GM12878 (cell line): ENCODE measurements at regions of chr1 and their contacts with region 1.

Region 1: DNA sequence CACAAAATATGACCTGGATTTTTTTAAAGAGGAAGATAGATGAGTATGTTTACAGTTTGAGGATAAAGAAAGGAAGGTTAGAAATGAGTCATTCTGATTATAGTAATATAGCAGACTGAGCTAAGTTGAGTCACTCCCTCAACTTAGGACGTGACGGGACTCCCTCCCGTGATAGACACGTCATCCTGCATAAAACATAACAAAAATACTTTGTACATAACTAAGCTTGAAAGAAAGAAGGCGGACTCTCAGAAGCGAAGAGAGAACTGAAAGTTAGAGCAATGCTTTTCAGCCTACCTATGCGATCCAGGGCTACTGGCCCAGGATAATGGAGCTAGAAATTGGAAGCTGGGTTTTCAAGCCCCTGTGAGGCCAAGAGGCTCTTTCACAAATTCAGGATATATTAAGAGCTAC is 53.0 kb upstream of the DESI2 start:
- DNase-seq: peak; percentile 40
- ATAC-seq: peak; percentile 94
- H3K4me3 ChIP-seq: no peak overlapping the region
- H3K27ac ChIP-seq: no peak overlapping the region
- H3K4me1 ChIP-seq: peaks cover 4% of the 10 kb centered on the region
- H3K27me3 ChIP-seq: peaks cover 2% of the 10 kb centered on the region in 2 experiments; a peak in 2 of 4 replicates
- CTCF ChIP-seq: no peak
- EP300 ChIP-seq: peak; percentile 60 to 61
- POLR2A ChIP-seq: no peak
- RAD21 ChIP-seq: no peak

Region 2: GRCh38 chr1:244536316-244536715 is 63.6 kb before region 1 on chr1:
- CTCF ChIA-PET with region 1: no interaction called
- POLR2A ChIA-PET with region 1: no interaction called
- RAD21 ChIA-PET with region 1: no interaction called
- SMC1A ChIA-PET with region 1: no interaction called
- in situ Hi-C with region 1: no loop called
- intact Hi-C with region 1: no loop called
- DNase-seq: no peak
- ATAC-seq: peak; percentile 61
- H3K4me3 ChIP-seq: no peak overlapping the region
- H3K27ac ChIP-seq: no peak overlapping the region
- H3K4me1 ChIP-seq: no peaks in the 10 kb centered on the region
- H3K27me3 ChIP-seq: no peaks in the 10 kb centered on the region
- CTCF ChIP-seq: no peak
- EP300 ChIP-seq: no peak
- POLR2A ChIP-seq: no peak
- RAD21 ChIP-seq: no peak

Region 3: DNA sequence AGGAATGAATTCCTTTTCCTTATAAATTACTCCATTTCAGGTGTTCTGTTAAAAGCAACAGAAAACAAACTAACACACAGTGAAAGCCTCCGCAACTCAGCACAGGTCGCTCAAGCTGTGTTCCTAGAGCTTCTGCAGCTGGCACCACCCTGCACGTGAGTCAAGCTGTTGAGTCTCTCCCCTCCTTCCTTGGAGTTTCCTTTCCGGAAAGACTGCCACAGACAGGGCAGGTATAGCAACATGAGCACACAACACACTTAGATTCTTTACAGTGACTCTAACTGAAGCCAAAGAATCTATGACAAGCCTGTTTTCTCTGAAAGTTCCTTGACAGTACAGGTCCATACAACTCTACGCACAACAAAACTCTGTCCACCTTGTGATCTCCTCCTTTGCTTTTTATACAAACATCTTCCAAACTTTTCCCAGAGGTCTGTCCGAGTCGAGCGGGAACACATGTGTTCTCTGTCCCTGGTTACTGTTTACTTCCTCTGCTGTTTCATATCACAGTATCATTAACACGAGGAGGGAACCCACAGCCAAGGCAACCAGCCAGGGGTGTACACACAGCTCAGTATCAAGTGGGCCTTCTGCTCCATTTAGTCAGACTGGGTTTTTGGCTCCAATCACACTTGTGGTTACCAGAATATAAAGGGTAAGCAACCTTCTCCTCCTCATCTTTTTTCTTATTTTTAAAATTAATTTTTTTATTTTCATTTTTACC is 14.3 kb after region 1 on chr1:
- CTCF ChIA-PET with region 1: interaction called, 10 read pairs
- POLR2A ChIA-PET with region 1: no interaction called
- RAD21 ChIA-PET with region 1: interaction called, 4 read pairs
- SMC1A ChIA-PET with region 1: interaction called, 8 read pairs
- in situ Hi-C with region 1: no loop called
- intact Hi-C with region 1: no loop called
- DNase-seq: no peak
- ATAC-seq: no peak
- H3K4me3 ChIP-seq: no peak overlapping the region
- H3K27ac ChIP-seq: no peak overlapping the region
- H3K4me1 ChIP-seq: no peaks in the 10 kb centered on the region
- H3K27me3 ChIP-seq: peaks cover 0 to under 1% of the 10 kb centered on the region in 2 experiments; a peak in 2 of 4 replicates
- CTCF ChIP-seq: no peak
- EP300 ChIP-seq: no peak
- POLR2A ChIP-seq: no peak
- RAD21 ChIP-seq: no peak

Region 4: DNA sequence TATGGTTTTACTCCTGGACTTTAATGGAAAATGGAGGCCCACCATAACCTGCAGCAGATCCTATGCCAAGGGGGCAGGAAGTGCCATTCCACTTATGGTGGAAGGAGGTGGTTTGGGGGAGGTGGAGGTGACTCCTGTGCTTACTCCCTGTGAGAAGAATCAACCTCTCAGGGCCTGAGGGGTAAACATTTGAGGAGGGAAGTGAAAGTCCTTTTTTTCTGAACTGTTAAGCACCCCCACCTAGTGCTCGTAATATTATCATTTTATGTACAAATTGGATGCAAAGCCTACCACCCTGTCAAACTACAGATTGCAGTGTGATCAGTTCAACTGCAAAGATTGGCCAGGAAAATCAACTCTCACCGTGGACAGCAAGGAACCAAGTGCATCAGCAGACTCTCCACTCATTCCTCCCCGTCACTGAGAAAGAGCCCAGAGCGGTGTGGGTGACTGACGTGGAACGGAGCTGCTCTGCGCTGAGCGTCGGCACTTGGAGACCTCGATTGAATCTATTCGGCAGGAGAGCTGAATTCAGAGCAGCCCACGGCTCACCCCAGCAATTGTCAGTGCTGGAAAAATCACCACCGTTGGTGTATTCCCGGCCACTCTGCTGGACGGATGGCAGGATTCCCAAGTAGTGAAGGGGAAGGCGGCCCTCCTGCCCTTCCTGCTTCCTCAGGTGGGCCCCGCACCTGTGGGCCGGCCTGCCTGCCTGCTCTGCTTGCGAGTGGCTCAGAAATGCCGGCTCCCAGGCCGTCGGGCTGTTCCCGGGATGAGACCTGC is 188.7 kb after region 1 on chr1:
- CTCF ChIA-PET with region 1: interaction called, 169 read pairs
- POLR2A ChIA-PET with region 1: no interaction called
- RAD21 ChIA-PET with region 1: interaction called, 3 read pairs
- SMC1A ChIA-PET with region 1: interaction called, 5 read pairs
- in situ Hi-C with region 1: no loop called
- intact Hi-C with region 1: no loop called
- DNase-seq: no peak
- ATAC-seq: no peak
- H3K4me3 ChIP-seq: no peak overlapping the region
- H3K27ac ChIP-seq: no peak overlapping the region
- H3K4me1 ChIP-seq: no peaks in the 10 kb centered on the region
- H3K27me3 ChIP-seq: peaks cover 0 to 2% of the 10 kb centered on the region in 2 experiments; a peak in 2 of 4 replicates
- CTCF ChIP-seq: no peak
- EP300 ChIP-seq: no peak
- POLR2A ChIP-seq: no peak
- RAD21 ChIP-seq: no peak